GM12878 (cell line): ENCODE measurements at regions of chr1 and their contacts with region 1.

Region 1: DNA sequence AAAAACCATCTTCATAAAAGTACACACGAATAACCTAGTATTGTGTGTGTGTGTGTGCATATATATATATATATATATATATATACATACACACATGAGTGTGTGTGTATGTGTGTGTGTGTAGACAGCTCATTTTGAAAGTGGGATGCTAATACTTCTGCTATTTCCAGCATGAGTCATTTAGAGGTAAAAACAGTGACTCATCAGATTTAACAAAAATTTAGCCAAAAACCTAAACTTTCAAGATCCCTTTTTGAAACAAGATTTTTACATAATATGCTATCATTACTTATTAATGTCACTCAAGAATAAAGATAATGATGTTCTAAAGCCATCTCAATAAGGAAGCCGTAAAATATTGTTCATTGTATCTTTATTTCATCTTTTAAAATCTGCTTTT is 35.6 kb upstream of the ADGRL4 start:
- DNase-seq: peak; percentile 44
- ATAC-seq: peak; percentile 64
- H3K4me3 ChIP-seq: no peak overlapping the region
- H3K27ac ChIP-seq: no peak overlapping the region
- H3K4me1 ChIP-seq: peaks cover 8% of the 10 kb centered on the region; the same call in 1 of the 2 replicates
- H3K27me3 ChIP-seq: no peaks in the 10 kb centered on the region
- CTCF ChIP-seq: no peak
- EP300 ChIP-seq: peak; percentile 58 to 59; a peak in 2 of 4 replicates
- POLR2A ChIP-seq: no peak
- RAD21 ChIP-seq: no peak

Region 2: GRCh38 chr1:78855258-78855657 is 186.9 kb before region 1 on chr1:
- CTCF ChIA-PET with region 1: no interaction called
- POLR2A ChIA-PET with region 1: no interaction called
- RAD21 ChIA-PET with region 1: no interaction called
- SMC1A ChIA-PET with region 1: no interaction called
- in situ Hi-C with region 1: no loop called
- intact Hi-C with region 1: loop called (anchors 5 kb)
- DNase-seq: peak; percentile 46
- ATAC-seq: peak; percentile 93
- H3K4me3 ChIP-seq: no peak overlapping the region
- H3K27ac ChIP-seq: no peak overlapping the region
- H3K4me1 ChIP-seq: no peaks in the 10 kb centered on the region
- H3K27me3 ChIP-seq: no peaks in the 10 kb centered on the region
- CTCF ChIP-seq: no peak
- EP300 ChIP-seq: no peak; a peak in 1 of 4 replicates
- POLR2A ChIP-seq: no peak
- RAD21 ChIP-seq: no peak

Region 3: DNA sequence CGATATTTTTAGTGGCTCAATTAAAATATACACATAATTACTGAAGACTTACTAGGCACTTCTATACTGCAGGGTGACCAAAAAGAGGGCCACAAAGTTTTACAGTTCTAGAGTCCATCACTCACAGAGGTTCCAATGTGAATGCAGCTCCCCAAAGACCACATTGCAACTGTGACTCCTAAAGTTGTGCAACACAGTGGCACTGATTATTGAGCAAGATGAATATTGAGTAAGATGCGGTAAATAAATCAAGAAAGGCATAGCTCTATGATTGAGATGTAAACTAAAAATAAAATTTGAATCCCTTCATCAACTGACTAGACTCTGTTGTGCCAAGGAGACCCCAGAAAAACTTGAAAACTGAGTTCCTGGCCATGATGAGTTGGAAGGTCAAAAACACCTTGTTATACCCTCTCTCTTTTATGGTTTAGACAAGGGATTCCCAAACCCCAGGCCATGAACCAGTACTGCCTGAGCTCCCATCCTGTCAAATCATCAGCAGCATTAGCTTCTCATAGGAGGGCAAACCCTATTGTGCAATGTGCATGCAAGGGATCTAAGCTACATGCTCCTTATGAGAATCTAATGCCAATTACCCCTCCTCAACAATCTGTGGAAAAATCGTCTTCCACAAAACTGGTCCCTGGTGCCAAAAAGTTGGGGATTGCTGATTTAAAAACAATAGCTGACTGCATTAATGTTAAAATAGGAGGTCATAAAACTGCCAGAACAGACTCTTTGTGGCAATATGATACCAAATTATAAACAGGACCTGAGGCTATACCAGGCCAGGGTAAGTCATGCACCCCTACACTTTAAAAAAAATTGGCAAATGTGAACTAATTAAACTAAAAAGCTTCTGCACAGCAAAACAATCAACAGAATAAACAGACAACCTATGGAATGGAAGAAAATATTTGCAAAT is 129.9 kb before region 1 on chr1:
- CTCF ChIA-PET with region 1: no interaction called
- POLR2A ChIA-PET with region 1: no interaction called
- RAD21 ChIA-PET with region 1: no interaction called
- SMC1A ChIA-PET with region 1: no interaction called
- in situ Hi-C with region 1: no loop called
- intact Hi-C with region 1: no loop called
- DNase-seq: no peak
- ATAC-seq: no peak
- H3K4me3 ChIP-seq: no peak overlapping the region
- H3K27ac ChIP-seq: no peak overlapping the region
- H3K4me1 ChIP-seq: no peaks in the 10 kb centered on the region
- H3K27me3 ChIP-seq: no peaks in the 10 kb centered on the region
- CTCF ChIP-seq: no peak
- EP300 ChIP-seq: no peak
- POLR2A ChIP-seq: no peak
- RAD21 ChIP-seq: no peak

Region 4: GRCh38 chr1:79193211-79194079 is 151.3 kb after region 1 on chr1:
- CTCF ChIA-PET with region 1: no interaction called
- POLR2A ChIA-PET with region 1: no interaction called
- RAD21 ChIA-PET with region 1: no interaction called
- SMC1A ChIA-PET with region 1: no interaction called
- in situ Hi-C with region 1: no loop called
- intact Hi-C with region 1: loop called (anchors 2 kb)
- DNase-seq: peak; percentile 41
- ATAC-seq: peak; percentile 78
- H3K4me3 ChIP-seq: no peak overlapping the region
- H3K27ac ChIP-seq: no peak overlapping the region
- H3K4me1 ChIP-seq: no peaks in the 10 kb centered on the region
- H3K27me3 ChIP-seq: no peaks in the 10 kb centered on the region
- CTCF ChIP-seq: no peak
- EP300 ChIP-seq: no peak
- POLR2A ChIP-seq: no peak
- RAD21 ChIP-seq: no peak

Region 5: DNA sequence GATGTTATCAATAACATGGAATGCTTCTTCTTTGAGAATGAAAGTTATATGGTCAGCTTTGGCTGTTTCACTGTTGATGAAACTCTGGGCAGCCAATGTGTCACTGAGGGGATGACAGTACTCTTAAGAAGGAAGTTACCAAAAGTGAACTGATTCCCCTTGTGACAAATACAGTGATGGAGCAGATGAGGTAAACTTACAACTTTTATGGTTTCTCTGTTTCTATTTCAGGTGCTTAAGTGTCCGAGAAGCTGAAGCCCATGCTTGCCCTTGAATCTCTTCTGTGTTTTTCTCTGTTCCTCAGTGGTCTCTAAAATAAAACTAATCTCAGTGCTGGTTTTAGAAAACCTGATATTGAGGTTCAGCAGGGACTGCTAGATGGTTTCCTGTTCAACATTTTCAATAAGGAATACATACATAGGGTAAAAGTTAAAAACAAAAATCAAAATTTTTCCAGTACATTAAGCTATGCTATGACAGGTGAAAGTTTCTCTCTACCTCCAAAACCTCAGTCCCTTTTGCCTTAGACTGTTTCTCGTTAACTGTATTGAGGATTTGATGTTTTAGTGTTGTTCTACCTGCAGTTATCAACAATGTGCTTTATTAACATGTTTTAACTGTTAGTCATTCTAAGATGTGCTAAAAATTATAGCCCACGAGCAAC is 418.8 kb after region 1 on chr1:
- CTCF ChIA-PET with region 1: no interaction called
- POLR2A ChIA-PET with region 1: no interaction called
- RAD21 ChIA-PET with region 1: no interaction called
- SMC1A ChIA-PET with region 1: no interaction called
- in situ Hi-C with region 1: no loop called
- intact Hi-C with region 1: loop called (anchors 10 kb)
- DNase-seq: peak; percentile 78
- ATAC-seq: peak; percentile 97
- H3K4me3 ChIP-seq: peak overlapping the region; percentile 8; the same call in 1 of the 2 replicates
- H3K27ac ChIP-seq: peak overlapping the region; percentile 78
- H3K4me1 ChIP-seq: peaks cover 29% of the 10 kb centered on the region
- H3K27me3 ChIP-seq: no peaks in the 10 kb centered on the region
- CTCF ChIP-seq: no peak
- EP300 ChIP-seq: no peak; a peak in 1 of 4 replicates
- POLR2A ChIP-seq: no peak
- RAD21 ChIP-seq: no peak